GM13976 (cell line): ENCODE measurements at regions of chr17 and their contacts with region 1.

Region 1: DNA sequence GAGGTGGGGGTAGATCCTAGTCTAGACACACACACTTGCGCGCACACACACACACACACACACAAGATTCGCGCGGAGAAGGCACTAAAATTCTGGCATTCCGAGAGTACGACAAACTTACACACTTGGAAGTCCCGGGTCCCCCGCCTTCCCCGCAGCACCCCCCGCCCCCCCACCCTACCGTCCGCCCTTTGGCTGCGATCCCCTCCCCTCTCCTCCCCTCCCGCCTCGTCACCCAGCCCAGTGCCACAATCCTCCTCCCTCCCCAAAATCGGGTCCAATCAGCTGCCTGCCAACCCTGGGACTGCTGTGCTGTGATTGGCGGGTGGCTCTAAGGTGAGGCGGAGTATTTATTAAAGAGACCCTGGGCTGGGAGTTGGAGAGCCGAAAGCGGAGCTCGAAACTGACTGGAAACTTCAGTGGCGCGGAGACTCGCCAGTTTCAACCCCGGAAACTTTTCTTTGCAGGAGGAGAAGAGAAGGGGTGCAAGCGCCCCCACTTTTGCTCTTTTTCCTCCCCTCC is at the start of gene SOX9:
- DNase-seq: peak; percentile 92
- CTCF ChIP-seq: no peak

Region 2: DNA sequence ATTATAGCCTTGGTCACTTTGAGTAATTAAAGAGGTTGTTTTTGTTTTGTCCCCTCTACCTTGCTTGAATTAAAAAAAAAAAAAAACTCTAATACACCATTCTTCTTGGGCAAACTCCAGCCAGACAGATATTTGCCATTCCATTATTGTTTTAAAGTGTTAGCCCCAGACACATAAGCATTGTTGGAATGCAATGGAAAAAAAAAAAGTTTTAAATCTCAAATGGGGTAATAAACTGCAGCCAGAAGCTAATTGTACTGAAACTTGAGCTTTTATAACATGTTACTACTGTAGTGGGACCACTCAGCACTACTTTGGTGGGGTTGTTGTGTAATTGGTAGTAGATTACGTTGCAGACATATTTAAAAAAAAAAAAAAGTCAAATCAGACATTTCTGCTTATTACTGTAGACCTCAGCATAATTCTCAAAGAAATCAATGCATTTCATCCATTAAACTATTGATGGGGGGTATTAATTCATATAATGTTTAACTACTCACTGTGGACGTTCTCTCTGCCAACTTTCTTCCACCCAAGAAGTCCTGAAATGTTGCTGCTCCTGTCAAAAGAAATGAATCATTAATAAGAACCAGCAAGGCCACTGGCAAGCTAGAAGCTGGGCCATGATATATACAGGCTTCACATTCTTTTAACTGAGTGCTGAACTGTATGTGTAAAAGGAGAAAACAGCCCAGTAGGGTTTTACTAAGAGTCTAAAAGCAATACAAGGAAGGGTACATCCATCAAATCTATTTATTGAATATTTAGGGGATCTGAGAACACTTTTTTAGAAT is 626.4 kb before region 1 on chr17:
- in situ Hi-C with region 1: loop called (anchors 25 kb)
- DNase-seq: no peak
- CTCF ChIP-seq: no peak